ENCODE measurements at regions of chr7 and their contacts with region 1.

Region 1: GRCh38 chr7:154927624-154928143 is 75.2 kb downstream of the PAXIP1 start:
- DNase-seq: peak; percentile 45 to 90 (median 74)
- ATAC-seq: peak; percentile 60 to 71 (median 67)
- H3K4me3 ChIP-seq: peak overlapping the region; percentile 66 to 74
- H3K4me3 Mint-ChIP-seq: peak overlapping the region; percentile 88 to 97 (median 96)
- H3K27ac ChIP-seq: peak overlapping the region; percentile 85
- H3K27ac Mint-ChIP-seq: peak overlapping the region; percentile 96
- H3K4me1 ChIP-seq: peaks cover 13 to 24% of the 10 kb centered on the region in 2 experiments
- H3K4me1 Mint-ChIP-seq: peaks cover 36 to 39% (median 38%) of the 10 kb centered on the region in 3 donors
- H3K27me3 ChIP-seq: no peaks in the 10 kb centered on the region
- H3K27me3 Mint-ChIP-seq: no peaks in the 10 kb centered on the region

Region 2: DNA sequence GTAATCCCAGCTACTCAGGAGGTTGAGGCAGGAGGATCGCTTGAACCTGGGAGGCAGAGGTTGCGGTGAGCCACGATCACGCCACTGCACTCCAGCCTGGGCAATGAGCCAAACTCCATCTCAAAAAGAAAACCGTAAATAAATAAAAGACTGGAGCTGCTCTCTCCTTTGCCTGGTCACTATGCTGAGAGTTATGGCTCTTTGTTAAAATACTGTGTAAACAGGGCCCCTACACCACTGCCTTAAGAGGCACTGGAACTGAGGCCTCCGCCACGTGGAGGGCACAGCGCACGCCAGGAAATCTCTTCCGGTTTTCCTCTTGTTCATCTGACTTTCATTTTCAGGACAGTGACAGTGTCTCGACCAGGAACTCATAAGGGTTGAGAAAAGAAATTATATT is 48.1 kb before region 1 on chr7:
- CTCF ChIA-PET with region 1: no interaction called
- POLR2A ChIA-PET with region 1: no interaction called
- DNase-seq: no peak
- ATAC-seq: no peak
- H3K4me3 ChIP-seq: no peak overlapping the region
- H3K4me3 Mint-ChIP-seq: no peak overlapping the region
- H3K27ac ChIP-seq: no peak overlapping the region
- H3K27ac Mint-ChIP-seq: no peak overlapping the region
- H3K4me1 ChIP-seq: no peaks in the 10 kb centered on the region
- H3K4me1 Mint-ChIP-seq: no peaks in the 10 kb centered on the region
- H3K27me3 ChIP-seq: peaks cover 0 to 38% of the 10 kb centered on the region in 2 experiments
- H3K27me3 Mint-ChIP-seq: peaks cover 6 to 25% of the 10 kb centered on the region in 2 donors

Region 3: DNA sequence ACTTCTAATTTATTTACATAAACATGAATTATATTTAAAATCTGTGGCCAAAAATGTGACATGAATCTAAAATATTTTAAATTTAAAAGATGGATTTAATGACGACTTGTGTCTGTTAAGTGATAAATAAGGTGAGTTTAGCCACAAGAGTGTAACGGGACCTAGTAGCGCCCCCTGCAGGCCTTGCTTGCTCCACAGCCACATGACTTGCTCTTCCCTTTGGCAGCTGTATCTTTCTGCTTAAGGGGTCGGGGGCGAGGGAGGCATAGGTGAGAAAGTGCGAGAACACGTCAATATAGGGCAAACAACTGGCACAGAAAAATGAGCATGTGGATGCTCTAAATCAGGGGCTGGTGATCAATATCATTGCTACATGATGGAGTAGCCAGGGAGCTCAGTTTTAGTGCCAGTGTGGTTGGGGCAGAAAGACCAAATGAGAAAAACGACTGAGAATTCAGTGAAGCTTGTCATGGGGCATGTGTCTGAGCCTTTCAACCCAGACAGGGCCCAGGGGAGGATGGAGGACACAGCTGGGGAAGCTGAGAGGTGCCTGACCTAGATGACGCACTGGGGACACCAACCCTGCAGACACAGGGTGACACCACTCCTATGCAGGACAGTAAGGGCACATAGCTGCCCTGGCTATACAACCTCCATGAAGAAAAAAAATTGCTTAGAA is 25.5 kb after region 1 on chr7:
- CTCF ChIA-PET with region 1: interaction called, 27 to 56 read pairs
- POLR2A ChIA-PET with region 1: interaction called in 1 of 2 experiments, 5 read pairs
- DNase-seq: peak; percentile 13 to 83 (median 61)
- ATAC-seq: peak in 2 of 4 experiments; percentile 59 to 61
- H3K4me3 ChIP-seq: no peak overlapping the region
- H3K4me3 Mint-ChIP-seq: no peak overlapping the region
- H3K27ac ChIP-seq: no peak overlapping the region
- H3K27ac Mint-ChIP-seq: no peak overlapping the region
- H3K4me1 ChIP-seq: no peaks in the 10 kb centered on the region
- H3K4me1 Mint-ChIP-seq: no peaks in the 10 kb centered on the region
- H3K27me3 ChIP-seq: no peaks in the 10 kb centered on the region
- H3K27me3 Mint-ChIP-seq: no peaks in the 10 kb centered on the region

Region 4: GRCh38 chr7:155205368-155206317 is 278.0 kb after region 1 on chr7:
- CTCF ChIA-PET with region 1: interaction called in 1 of 2 experiments, 12 read pairs
- POLR2A ChIA-PET with region 1: no interaction called
- DNase-seq: peak; percentile 50 to 95 (median 80)
- ATAC-seq: peak; percentile 92 to 96 (median 94)
- H3K4me3 ChIP-seq: peak overlapping the region; percentile 63 to 66
- H3K4me3 Mint-ChIP-seq: peak overlapping the region; percentile 68 to 78 (median 77)
- H3K27ac ChIP-seq: peak overlapping the region; percentile 88
- H3K27ac Mint-ChIP-seq: peak overlapping the region; percentile 83 to 90
- H3K4me1 ChIP-seq: peaks cover 9 to 26% of the 10 kb centered on the region in 2 experiments
- H3K4me1 Mint-ChIP-seq: peaks cover 21 to 28% (median 23%) of the 10 kb centered on the region in 3 donors
- H3K27me3 ChIP-seq: peaks cover 0 to 3% of the 10 kb centered on the region in 2 experiments
- H3K27me3 Mint-ChIP-seq: no peaks in the 10 kb centered on the region

Region 5: DNA sequence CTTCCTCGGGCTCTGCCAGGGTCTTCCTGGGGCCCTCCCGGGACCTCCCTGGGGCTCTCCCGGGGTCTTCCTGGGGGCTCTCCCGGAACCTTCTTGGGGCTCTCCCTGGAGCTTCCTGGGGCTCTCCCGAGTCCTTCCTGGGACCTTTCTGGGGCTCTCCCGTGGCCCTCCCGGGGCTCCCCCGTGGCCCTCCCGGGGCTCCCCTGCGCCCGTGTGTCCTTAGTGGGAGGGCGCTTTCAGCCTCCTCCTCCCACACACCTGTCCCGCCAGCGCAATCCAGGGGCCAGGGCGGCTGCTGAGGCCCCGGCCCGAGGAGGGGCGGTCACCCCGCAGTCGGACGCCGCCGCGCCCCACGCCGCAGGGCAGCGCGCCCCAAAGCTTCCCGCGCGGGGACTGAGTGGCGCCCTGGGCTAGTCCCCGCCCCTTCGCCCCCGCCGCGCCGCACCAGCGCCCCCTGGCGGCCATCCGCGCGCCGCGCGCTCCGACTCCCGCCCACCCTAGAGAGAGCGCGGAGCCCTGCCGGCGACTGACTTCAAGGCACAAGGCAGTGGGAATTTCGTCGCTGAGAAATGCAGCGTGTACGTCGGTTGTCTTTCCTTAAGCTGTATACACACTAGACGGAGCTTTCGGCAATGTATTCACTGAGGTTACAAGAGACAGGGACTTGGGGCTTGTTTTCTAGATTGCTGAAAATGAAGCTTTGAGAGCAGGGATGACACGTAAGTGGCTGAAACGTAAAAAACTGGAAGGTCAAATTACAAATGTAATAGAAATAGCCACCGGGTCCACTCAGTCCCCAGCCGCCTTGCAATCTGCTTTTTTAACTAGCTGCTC is 417.1 kb after region 1 on chr7:
- CTCF ChIA-PET with region 1: interaction called, 25 to 46 read pairs
- POLR2A ChIA-PET with region 1: interaction called in 1 of 2 experiments, 4 read pairs
- DNase-seq: peak; percentile 48 to 90 (median 77)
- ATAC-seq: peak; percentile 97 to 99 (median 98)
- H3K4me3 ChIP-seq: peak overlapping the region in 1 of 2 donors; percentile 42
- H3K4me3 Mint-ChIP-seq: peak overlapping the region; percentile 52 to 64 (median 55)
- H3K27ac ChIP-seq: no peak overlapping the region
- H3K27ac Mint-ChIP-seq: no peak overlapping the region
- H3K4me1 ChIP-seq: peaks cover 0 to 18% of the 10 kb centered on the region in 2 experiments
- H3K4me1 Mint-ChIP-seq: peaks cover 0 to 10% (median 4%) of the 10 kb centered on the region in 3 donors
- H3K27me3 ChIP-seq: peaks cover 0 to 33% of the 10 kb centered on the region in 2 experiments
- H3K27me3 Mint-ChIP-seq: peaks cover 7 to 8% of the 10 kb centered on the region in 2 donors